Sigmoid colon (tissue), 7 donors: ENCODE measurements at regions of chr10 and their contacts with region 1.

Region 1: DNA sequence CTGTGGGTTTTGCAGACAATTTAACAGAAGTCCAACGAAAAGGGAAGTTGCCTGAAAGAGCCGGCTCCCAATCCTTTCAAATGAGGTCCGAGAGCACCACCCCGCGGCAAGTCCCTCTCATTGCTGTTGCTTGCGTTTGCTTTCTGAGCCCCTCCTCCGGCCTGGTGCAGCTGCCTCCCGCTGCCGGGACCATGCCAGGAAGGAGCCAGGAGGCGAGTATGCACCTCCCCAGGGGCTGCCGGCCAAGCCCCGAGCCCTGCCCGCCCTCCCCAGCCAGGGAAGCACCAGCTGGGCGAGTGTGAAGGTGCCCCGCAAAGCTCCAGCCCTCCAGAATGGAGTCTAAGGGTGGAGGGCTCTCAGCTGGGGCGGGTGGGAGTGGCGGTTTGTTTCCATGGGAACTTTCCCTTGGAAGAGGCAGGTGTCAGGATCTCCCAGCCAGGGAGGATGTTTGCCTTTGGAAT is 25.8 kb upstream of the PPP2R2D start:
- DNase-seq: peak; percentile 80
- H3K4me3 ChIP-seq: no peak overlapping the region
- H3K27ac ChIP-seq: no peak overlapping the region
- H3K4me1 ChIP-seq: peaks cover 0 to 9% (median 7%) of the 10 kb centered on the region in 4 donors
- H3K27me3 ChIP-seq: peaks cover 0 to 23% (median 20%) of the 10 kb centered on the region in 3 donors
- CTCF ChIP-seq: peak in 3 of 4 experiments; percentile 3 to 58 (median 38)
- EP300 ChIP-seq: no peak
- POLR2A ChIP-seq: no peak

Region 2: GRCh38 chr10:130190055-130190736 is 1684.8 kb before region 1 on chr10:
- intact Hi-C with region 1: loop called (anchors 5 kb)
- DNase-seq: peak; percentile 91
- H3K4me3 ChIP-seq: peak overlapping the region; percentile 40 to 62 (median 50)
- H3K27ac ChIP-seq: peak overlapping the region in 1 of 4 donors; percentile 4
- H3K4me1 ChIP-seq: peaks cover 0 to 12% (median 7%) of the 10 kb centered on the region in 4 donors
- H3K27me3 ChIP-seq: peaks cover 0 to 9% (median 4%) of the 10 kb centered on the region in 3 donors
- CTCF ChIP-seq: peak; percentile 88 to 100 (median 92)
- EP300 ChIP-seq: no peak
- POLR2A ChIP-seq: no peak

Region 3: DNA sequence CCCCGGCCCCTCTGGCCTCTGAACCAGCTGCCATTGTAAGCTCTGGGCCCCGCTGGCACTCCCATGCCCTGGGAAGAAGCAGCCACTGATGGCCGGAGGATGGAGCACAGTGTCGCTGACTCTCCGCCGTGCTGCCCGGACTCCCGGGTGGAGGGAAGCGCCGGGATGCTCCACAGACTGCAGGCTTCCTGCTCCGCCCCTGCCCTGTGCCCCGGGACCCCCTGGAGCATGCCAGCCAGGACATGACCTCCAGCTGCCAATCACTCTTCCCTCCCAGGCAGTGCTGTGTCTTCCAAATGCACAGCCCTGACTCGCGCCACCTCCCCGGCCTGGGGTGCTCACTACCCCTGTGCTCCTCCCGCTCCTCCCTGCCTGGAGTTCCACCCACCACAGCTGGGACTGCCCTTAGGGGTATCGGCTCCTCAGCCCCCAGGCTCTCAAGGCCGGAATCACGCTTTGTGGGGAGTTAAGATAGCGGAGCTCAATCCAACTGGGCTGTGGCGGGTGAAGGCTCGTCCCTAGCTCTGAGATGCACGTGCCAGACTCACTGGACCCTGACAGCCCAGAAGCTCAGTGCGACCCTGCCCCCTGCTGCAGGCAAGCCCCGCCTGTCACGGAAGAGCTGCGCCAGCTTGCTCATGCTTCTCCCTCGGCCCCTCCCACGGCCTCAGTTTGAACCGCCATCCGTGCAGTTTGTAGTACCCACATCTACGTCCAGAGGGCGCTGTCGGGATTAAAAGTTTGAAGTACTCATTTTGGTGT is 421.2 kb before region 1 on chr10:
- intact Hi-C with region 1: loop called (anchors 10 kb)
- DNase-seq: no peak
- H3K4me3 ChIP-seq: peak overlapping the region in 3 of 4 donors; percentile 20 to 35 (median 31)
- H3K27ac ChIP-seq: no peak overlapping the region
- H3K4me1 ChIP-seq: peaks cover 0 to 13% (median 6%) of the 10 kb centered on the region in 4 donors
- H3K27me3 ChIP-seq: peaks cover 3 to 29% (median 14%) of the 10 kb centered on the region in 3 donors
- CTCF ChIP-seq: peak in 3 of 4 experiments; percentile 49 to 84 (median 64)
- EP300 ChIP-seq: no peak
- POLR2A ChIP-seq: no peak